ENCODE measurements at regions of chr17 and their contacts with region 1.

Region 1: DNA sequence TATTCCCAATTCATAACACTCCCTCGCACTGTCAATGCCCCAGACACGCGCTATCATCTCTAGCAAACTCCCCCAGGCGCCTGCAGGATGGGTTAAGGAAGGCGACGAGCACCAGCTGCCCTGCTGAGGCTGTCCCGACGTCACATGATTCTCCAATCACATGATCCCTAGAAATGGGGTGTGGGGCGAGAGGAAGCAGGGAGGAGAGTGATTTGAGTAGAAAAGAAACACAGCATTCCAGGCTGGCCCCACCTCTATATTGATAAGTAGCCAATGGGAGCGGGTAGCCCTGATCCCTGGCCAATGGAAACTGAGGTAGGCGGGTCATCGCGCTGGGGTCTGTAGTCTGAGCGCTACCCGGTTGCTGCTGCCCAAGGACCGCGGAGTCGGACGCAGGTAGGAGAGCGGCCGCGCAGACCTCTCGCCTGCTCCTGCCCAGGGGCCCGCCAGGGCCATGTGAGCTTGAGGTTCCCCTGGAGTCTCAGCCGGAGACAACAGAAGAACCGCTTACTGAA is at the start of gene GRN:
- DNase-seq: peak; percentile 98
- H3K4me3 ChIP-seq: peak within 1 kb of the TSS; percentile 67 to 75 (median 68)
- H3K27ac ChIP-seq: peak within 1 kb of the TSS; percentile 77 to 88 (median 88)
- H3K4me1 ChIP-seq: peaks cover 0 to 18% (median 16%) of the 10 kb centered on the region in 4 donors
- H3K27me3 ChIP-seq: no peaks in the 10 kb centered on the region
- CTCF ChIP-seq: no peak
- EP300 ChIP-seq: peak in 1 of 4 donors; percentile 82
- POLR2A ChIP-seq: peak; percentile 55 to 80
- total RNA-seq, gene GRN: 141 to 245 (median 171) TPM

Region 2: DNA sequence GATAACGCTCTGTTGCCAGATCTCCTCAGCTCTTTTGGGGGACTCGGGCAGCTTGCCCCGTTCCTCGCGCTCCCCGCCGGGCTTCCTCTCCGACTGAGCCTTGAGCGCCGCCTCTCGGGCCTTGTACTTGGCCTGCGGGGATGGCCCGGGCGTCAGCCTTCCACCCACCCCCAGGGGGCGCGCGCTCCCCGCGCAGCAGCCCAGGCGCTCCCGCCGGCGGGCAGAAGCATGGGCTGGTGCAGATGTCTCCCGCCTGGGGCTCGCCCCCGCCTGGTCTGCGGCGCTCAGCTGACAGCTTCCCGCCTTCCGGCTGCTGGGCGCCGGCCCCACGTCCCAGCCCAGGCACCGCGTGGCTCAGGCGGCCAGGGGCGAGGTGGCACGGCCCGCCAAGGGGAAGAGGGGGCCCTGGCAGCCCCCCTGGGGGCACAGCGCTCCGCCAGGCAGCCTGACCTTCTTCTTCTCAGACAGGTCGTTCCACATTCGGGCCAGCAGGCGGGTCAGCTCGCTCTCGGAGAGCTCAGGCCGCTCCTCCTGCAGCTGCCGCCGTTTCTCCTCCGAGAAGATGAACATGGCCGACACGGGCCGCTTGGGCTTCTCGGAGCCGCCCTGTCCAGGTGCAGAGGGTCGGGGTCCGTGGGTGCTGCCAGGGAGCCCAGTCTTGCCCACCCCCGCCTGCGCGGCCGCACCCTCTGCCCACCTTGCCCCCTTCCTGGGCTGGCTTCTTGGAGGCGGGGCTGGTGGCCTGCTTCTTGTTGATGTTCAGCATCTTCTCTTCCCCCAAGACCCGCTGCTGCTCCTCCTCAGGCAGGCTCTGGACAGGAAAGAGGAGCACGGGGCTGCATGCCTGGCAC is 134.4 kb before region 1 on chr17:
- intact Hi-C with region 1: loop called (anchors 5 kb)
- DNase-seq: peak; percentile 96
- H3K4me3 ChIP-seq: peak overlapping the region in 2 of 4 donors; percentile 1 to 21
- H3K27ac ChIP-seq: peak overlapping the region; percentile 65 to 74 (median 70)
- H3K4me1 ChIP-seq: peaks cover 0 to 38% (median 15%) of the 10 kb centered on the region in 4 donors
- H3K27me3 ChIP-seq: no peaks in the 10 kb centered on the region
- CTCF ChIP-seq: peak; percentile 95 to 99 (median 98)
- EP300 ChIP-seq: no peak
- POLR2A ChIP-seq: no peak

Region 3: DNA sequence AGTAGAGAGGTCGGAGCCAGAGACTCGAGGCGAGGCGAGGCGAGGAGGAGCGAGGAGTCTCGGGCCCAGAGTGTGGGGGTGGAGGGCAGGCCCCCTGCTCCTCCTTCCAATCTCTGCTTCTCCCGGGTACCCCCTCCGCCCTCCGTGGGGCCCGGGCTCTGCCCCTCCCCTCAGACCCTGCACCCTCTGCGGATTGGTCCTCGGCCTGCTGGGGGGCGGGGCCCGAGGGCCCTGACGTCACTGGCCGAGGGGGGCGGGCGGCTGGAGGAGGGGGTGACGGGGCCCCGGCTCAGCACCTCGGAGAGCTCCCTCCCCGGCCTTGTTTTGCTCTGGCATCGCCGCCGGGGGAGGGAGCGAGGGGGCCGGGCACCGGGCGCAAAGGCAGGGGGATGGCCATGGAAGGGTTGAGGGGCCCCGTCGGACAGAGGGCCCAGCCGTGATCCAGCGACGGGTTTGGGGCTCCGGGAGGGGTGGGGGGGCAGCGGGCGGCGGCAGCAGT is 36.6 kb before region 1 on chr17 and contains the start of gene RUNDC3A:
- intact Hi-C with region 1: loop called (anchors 5 kb)
- DNase-seq: peak; percentile 91
- H3K4me3 ChIP-seq: peak within 1 kb of the TSS; percentile 17 to 55 (median 44)
- H3K27ac ChIP-seq: peak within 1 kb of the TSS; percentile 68 to 87 (median 78)
- H3K4me1 ChIP-seq: peaks cover 0 to 21% (median 19%) of the 10 kb centered on the region in 4 donors
- H3K27me3 ChIP-seq: peaks cover 0 to 10% (median 7%) of the 10 kb centered on the region in 3 donors
- CTCF ChIP-seq: no peak
- EP300 ChIP-seq: no peak
- POLR2A ChIP-seq: no peak
- total RNA-seq, gene RUNDC3A: 1.2 to 10.5 (median 6.0) TPM